Activated CD4-positive, alpha-beta memory T cell treated with anti-CD3 and anti-CD28 coated beads, Interleukin-2, amount 10 ng/mL, durations not matched to agents 7 days and 5 days (primary cell): ENCODE measurements at regions of chr10 and their contacts with region 1.

Region 1: GRCh38 chr10:6530211-6530840 is 49.8 kb downstream of the PRKCQ start:
- DNase-seq: peak; percentile 91
- H3K4me3 Mint-ChIP-seq: peak overlapping the region; percentile 78
- H3K27ac Mint-ChIP-seq: peak overlapping the region; percentile 99
- H3K4me1 Mint-ChIP-seq: peaks cover 84% of the 10 kb centered on the region
- H3K27me3 Mint-ChIP-seq: no peaks in the 10 kb centered on the region

Region 2: GRCh38 chr10:6239213-6239991 is 290.9 kb before region 1 on chr10:
- CTCF ChIA-PET with region 1: no interaction called
- POLR2A ChIA-PET with region 1: no interaction called
- DNase-seq: peak; percentile 83
- H3K4me3 Mint-ChIP-seq: peak overlapping the region; percentile 14
- H3K27ac Mint-ChIP-seq: peak overlapping the region; percentile 49
- H3K4me1 Mint-ChIP-seq: peaks cover 31% of the 10 kb centered on the region
- H3K27me3 Mint-ChIP-seq: no peaks in the 10 kb centered on the region

Region 3: DNA sequence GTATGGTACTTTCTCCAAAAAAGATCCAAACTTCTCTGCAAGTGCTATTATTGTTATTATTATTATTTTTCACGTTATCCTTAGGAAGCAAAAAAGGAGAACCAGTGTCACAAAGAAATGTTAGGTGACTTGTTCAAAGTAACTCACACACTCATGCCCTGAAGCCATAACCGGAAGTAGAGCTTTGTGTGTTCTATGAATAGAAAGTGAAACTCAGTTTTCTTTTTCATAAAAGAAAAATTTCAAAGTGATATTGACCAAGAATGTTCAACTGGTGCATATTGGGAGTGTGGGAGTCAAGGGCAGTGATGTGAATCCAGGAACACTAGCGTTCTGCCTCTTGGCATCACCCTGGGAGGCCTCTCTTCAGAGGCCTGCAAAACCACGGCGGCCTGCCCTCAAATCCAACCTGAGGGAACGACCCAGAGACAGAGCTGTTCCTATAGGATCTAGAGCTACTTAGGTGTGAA is 56.4 kb before region 1 on chr10:
- CTCF ChIA-PET with region 1: interaction called, 15 read pairs
- POLR2A ChIA-PET with region 1: interaction called, 29 read pairs
- DNase-seq: peak; percentile 38
- H3K4me3 Mint-ChIP-seq: peak overlapping the region; percentile 86
- H3K27ac Mint-ChIP-seq: peak overlapping the region; percentile 96
- H3K4me1 Mint-ChIP-seq: peaks cover 66% of the 10 kb centered on the region
- H3K27me3 Mint-ChIP-seq: no peaks in the 10 kb centered on the region

Region 4: DNA sequence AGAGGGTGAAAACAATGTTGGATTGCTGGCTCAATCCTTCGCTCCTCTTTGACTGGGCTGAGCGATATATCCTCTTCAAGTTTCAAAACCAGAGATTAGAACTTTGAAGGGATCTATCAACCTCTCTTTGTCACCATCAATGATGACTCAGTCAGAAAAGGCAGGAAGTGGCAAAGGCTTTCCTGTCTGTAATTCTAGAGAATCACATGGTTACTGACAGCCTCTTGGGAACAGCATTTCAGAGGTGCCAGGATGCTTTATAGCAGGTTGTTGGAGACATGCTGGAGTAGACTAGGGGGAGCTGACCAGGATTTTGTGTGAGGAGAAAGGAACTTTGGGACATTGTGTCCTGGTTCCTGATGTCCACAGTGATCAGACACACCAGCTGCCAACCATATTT is 31.6 kb before region 1 on chr10:
- CTCF ChIA-PET with region 1: interaction called, 7 read pairs
- POLR2A ChIA-PET with region 1: interaction called, 67 read pairs
- DNase-seq: peak; percentile 58
- H3K4me3 Mint-ChIP-seq: peak overlapping the region; percentile 55
- H3K27ac Mint-ChIP-seq: peak overlapping the region; percentile 91
- H3K4me1 Mint-ChIP-seq: peaks cover 32% of the 10 kb centered on the region
- H3K27me3 Mint-ChIP-seq: no peaks in the 10 kb centered on the region

Region 5: GRCh38 chr10:6514844-6515780 is 15.2 kb before region 1 on chr10:
- CTCF ChIA-PET with region 1: interaction called, 3 read pairs
- POLR2A ChIA-PET with region 1: interaction called, 19 read pairs
- DNase-seq: no peak
- H3K4me3 Mint-ChIP-seq: no peak overlapping the region
- H3K27ac Mint-ChIP-seq: no peak overlapping the region
- H3K4me1 Mint-ChIP-seq: peaks cover 84% of the 10 kb centered on the region
- H3K27me3 Mint-ChIP-seq: no peaks in the 10 kb centered on the region

Region 6: GRCh38 chr10:6563075-6563474 is 32.7 kb after region 1 on chr10:
- CTCF ChIA-PET with region 1: interaction called, 8 read pairs
- POLR2A ChIA-PET with region 1: interaction called, 25 read pairs
- DNase-seq: peak; percentile 70
- H3K4me3 Mint-ChIP-seq: peak overlapping the region; percentile 71
- H3K27ac Mint-ChIP-seq: peak overlapping the region; percentile 92
- H3K4me1 Mint-ChIP-seq: peaks cover 90% of the 10 kb centered on the region
- H3K27me3 Mint-ChIP-seq: no peaks in the 10 kb centered on the region